Dendritic cell treated with granulocyte-macrophage colony-stimulating factor and Interleukin-4, amounts not matched to agents 40 ng/mL and 50 ng/mL, for 4 days (primary cell): ENCODE measurements at regions of chr16 and their contacts with region 1.

Region 1: DNA sequence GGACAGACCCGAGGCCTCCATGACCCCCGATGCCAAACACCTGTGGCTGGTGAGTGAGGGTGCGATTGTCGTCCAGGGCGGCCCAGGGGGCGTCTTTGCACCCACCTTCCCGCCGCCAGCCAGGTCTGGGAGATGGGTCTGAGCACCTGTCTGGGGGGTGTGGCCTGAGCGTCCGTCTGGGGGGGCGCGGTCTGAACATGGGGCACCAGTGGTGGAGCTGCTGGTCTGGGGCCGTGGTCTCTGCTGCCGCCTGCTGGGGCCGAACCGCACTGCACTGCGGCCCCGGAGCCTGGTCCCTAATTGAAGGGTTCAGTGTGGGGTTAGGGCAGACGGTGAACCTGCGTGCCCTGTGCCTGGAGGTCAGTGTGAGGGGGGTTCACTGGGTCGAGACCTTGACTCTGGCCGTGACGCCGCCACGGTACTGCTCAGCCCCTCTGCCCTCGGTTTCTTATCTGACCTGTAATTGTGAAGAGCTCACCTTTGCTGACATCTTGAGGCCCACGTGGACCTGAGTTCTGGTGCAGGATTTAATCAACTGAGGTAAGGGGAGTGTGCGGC is 12.6 kb upstream of the TCF25 start:
- H3K4me3 Mint-ChIP-seq: no peak overlapping the region
- H3K27ac Mint-ChIP-seq: peak overlapping the region; percentile 5
- H3K4me1 Mint-ChIP-seq: peaks cover 58% of the 10 kb centered on the region
- H3K27me3 Mint-ChIP-seq: peaks cover 23% of the 10 kb centered on the region

Region 2: GRCh38 chr16:89700100-89700648 is 160.7 kb before region 1 on chr16:
- intact Hi-C with region 1: loop called (anchors 2 kb)
- H3K4me3 Mint-ChIP-seq: peak overlapping the region; percentile 78
- H3K27ac Mint-ChIP-seq: peak overlapping the region; percentile 73
- H3K4me1 Mint-ChIP-seq: peaks cover 30% of the 10 kb centered on the region
- H3K27me3 Mint-ChIP-seq: peaks cover 14% of the 10 kb centered on the region

Region 3: GRCh38 chr16:89764711-89765201 is 96.1 kb before region 1 on chr16:
- intact Hi-C with region 1: loop called (anchors 5 kb)
- H3K4me3 Mint-ChIP-seq: peak overlapping the region; percentile 72
- H3K27ac Mint-ChIP-seq: peak overlapping the region; percentile 84
- H3K4me1 Mint-ChIP-seq: peaks cover 49% of the 10 kb centered on the region
- H3K27me3 Mint-ChIP-seq: no peaks in the 10 kb centered on the region

Region 4: DNA sequence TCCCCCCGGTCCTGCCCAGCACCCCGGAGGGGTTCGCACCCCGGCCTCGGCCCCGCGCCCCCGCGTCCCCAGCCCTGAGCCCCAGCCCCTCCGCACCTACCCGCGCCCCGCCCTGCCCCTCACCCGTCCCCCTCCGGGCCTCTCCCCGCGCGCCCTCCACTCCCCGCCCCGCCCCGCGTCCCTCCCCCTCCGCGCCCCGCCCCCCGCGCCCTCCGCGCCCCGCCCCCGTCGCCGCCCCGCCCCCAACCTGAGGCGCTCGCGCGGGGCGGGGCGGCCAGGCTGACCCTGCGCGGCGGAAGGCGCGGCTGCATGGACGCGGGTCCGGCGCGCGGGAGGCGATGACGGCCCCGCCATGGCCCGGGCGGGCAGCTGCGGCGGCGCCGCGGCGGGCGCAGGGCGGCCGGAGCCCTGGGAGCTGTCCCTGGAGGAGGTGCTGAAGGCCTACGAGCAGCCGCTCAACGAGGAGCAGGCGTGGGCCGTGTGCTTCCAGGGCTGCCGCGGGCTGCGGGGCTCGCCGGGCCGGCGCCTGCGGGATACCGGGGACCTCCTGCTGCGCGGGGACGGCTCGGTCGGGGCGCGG is 32.5 kb before region 1 on chr16 and contains the start of gene SPIRE2:
- intact Hi-C with region 1: loop called (anchors 5 kb)
- H3K4me3 Mint-ChIP-seq: peak within 1 kb of the TSS; percentile 57
- H3K27ac Mint-ChIP-seq: no peak within 1 kb of the TSS
- H3K4me1 Mint-ChIP-seq: peaks cover 11% of the 10 kb centered on the region
- H3K27me3 Mint-ChIP-seq: peaks cover 52% of the 10 kb centered on the region

Region 5: GRCh38 chr16:89922884-89923690 is 62.3 kb after region 1 on chr16 and contains the start of gene TUBB3:
- intact Hi-C with region 1: no loop called
- H3K4me3 Mint-ChIP-seq: peak within 1 kb of the TSS; percentile 71
- H3K27ac Mint-ChIP-seq: peak within 1 kb of the TSS; percentile 44
- H3K4me1 Mint-ChIP-seq: peaks cover 63% of the 10 kb centered on the region
- H3K27me3 Mint-ChIP-seq: peaks cover 82% of the 10 kb centered on the region